ENCODE measurements at regions of chr1 and their contacts with region 1.

Region 1: DNA sequence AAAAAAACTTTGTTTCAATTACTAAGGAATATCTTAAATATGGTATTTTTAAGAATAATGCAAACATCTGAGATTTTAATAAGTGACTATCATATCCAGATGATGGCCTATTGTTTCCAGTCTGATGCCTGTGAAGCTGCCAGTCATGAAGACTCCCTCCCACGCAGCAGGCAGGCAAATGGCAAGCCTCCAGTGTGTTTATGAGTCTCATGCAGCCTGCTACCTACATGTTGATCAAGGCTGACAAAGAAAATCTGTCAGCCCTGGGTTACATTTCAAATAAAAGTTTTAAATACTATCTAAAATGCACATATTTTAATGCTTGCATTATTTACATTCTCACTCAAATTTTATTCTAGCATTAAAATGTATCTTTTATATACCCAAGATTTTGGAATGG is 137.6 kb upstream of the RNPC3 start:
- DNase-seq: no peak

Region 2: DNA sequence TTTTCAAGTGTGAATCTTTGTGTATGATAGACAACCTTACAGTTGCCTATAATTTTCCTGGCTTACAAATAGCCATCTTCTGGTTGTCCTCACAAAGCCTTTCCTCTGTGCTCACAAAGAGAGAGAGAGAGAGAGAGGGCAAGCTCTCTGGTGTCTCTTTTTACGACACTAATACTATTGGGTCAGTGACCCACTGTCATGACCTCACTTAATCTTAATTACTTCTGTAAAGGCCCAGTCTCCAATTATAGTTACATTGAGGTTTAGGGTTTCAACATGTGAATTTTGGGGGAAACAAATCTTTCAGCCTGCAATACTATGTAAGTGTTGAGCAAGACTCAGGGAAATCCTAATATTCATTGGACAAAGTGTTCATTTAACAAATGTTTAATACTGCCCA is 112.2 kb before region 1 on chr1:
- in situ Hi-C with region 1: no loop called
- DNase-seq: peak; percentile 45

Region 3: GRCh38 chr1:103309786-103310185 is 78.1 kb before region 1 on chr1:
- in situ Hi-C with region 1: loop called (anchors 10 kb)
- DNase-seq: no peak

Region 4: GRCh38 chr1:103327054-103327719 is 60.7 kb before region 1 on chr1:
- in situ Hi-C with region 1: no loop called
- DNase-seq: no peak

Region 5: GRCh38 chr1:103424650-103425049 is 36.8 kb after region 1 on chr1:
- in situ Hi-C with region 1: loop called (anchors 5 kb)
- DNase-seq: no peak

Region 6: GRCh38 chr1:103477101-103477500 is 89.2 kb after region 1 on chr1:
- in situ Hi-C with region 1: no loop called
- DNase-seq: no peak

Measured in G401 (cell line).